H1 (cell line): ENCODE measurements at regions of chr2 and their contacts with region 1.

Region 1: GRCh38 chr2:74482801-74483674 is at the starts of genes CCDC142 and TTC31:
- DNase-seq: peak; percentile 83 to 96
- H3K4me3 ChIP-seq: peak within 1 kb of the TSS; percentile 69 to 99 (median 93)
- H3K27ac ChIP-seq: peak within 1 kb of the TSS; percentile 92
- H3K4me1 ChIP-seq: peaks cover 0 to 10% (median 4%) of the 10 kb centered on the region in 4 experiments; a peak in 4 of 7 replicates
- H3K27me3 ChIP-seq: no peaks in the 10 kb centered on the region; a peak in 1 of 7 replicates
- CTCF ChIP-seq: peak; percentile 81 to 95 (median 89)
- EP300 ChIP-seq: no peak
- POLR2A ChIP-seq: peak in 1 of 2 experiments; percentile 91; a peak in 2 of 3 replicates
- RAD21 ChIP-seq: peak; percentile 79 to 85
- total RNA-seq, gene CCDC142: 10.7 and 12.1 TPM in 2 replicates
- total RNA-seq, gene TTC31: 27.4 and 28.8 TPM in 2 replicates

Region 2: DNA sequence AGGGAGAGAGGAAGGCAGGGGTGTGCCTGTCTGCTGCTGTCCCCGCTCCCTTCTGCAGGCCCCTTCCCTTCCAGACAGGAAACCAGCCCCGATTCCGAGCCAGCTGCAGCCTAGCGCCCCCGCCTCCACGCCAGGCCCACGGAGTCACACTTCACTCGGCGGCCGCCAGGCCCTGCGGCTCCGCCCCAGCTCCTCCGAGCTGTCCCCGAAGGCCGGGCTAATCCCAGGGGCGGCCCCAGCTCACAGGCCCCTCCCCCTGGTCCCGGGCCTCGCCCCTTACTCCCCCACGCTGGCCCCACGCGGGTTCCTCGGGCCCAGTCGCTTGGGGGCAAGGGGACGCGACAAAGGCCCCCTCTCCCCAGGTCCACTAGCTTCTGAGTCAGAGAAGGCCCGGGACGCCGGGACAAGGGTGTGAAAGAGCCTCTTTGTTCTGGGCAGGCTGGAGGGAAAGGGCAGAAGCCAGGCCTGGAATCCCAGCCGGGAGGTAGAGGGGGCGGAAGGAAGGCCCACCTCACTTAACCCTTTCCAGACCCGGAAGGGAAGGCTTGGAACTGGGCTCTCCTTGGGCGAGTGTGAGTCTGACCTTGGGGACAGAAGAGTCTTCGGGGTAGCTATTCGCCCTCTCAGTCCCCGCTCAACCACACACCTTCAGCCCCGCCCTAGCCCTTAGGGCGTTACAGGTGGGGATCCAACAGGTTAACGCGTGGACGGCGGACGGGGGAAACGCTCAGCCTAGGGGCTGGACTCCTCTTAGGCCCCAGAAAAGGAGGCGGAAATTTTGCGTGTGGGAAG is 42.5 kb before region 1 on chr2:
- CTCF ChIA-PET with region 1: interaction called, 4 read pairs
- POLR2A ChIA-PET with region 1: interaction called, 19 read pairs
- DNase-seq: peak in 1 of 2 experiments; percentile 92
- H3K4me3 ChIP-seq: peak overlapping the region; percentile 69 to 90 (median 80)
- H3K27ac ChIP-seq: peak overlapping the region; percentile 87
- H3K4me1 ChIP-seq: peaks cover 4 to 24% (median 17%) of the 10 kb centered on the region in 4 experiments; a peak in 6 of 7 replicates
- H3K27me3 ChIP-seq: no peaks in the 10 kb centered on the region; a peak in 2 of 7 replicates
- CTCF ChIP-seq: peak in 2 of 3 experiments; percentile 12 to 18; a peak in 2 of 4 replicates
- EP300 ChIP-seq: no peak
- POLR2A ChIP-seq: peak in 1 of 2 experiments; percentile 50; a peak in 1 of 3 replicates
- RAD21 ChIP-seq: no peak

Region 3: GRCh38 chr2:74464406-74464928 is 18.6 kb before region 1 on chr2:
- CTCF ChIA-PET with region 1: interaction called, 73 read pairs
- POLR2A ChIA-PET with region 1: interaction called, 85 read pairs
- DNase-seq: no peak
- H3K4me3 ChIP-seq: peak overlapping the region; percentile 54 to 85 (median 79)
- H3K27ac ChIP-seq: no peak overlapping the region
- H3K4me1 ChIP-seq: peaks cover 0 to 2% (median 0%) of the 10 kb centered on the region in 4 experiments; a peak in 2 of 7 replicates
- H3K27me3 ChIP-seq: no peaks in the 10 kb centered on the region
- CTCF ChIP-seq: no peak
- EP300 ChIP-seq: no peak
- POLR2A ChIP-seq: no peak
- RAD21 ChIP-seq: no peak

Region 4: DNA sequence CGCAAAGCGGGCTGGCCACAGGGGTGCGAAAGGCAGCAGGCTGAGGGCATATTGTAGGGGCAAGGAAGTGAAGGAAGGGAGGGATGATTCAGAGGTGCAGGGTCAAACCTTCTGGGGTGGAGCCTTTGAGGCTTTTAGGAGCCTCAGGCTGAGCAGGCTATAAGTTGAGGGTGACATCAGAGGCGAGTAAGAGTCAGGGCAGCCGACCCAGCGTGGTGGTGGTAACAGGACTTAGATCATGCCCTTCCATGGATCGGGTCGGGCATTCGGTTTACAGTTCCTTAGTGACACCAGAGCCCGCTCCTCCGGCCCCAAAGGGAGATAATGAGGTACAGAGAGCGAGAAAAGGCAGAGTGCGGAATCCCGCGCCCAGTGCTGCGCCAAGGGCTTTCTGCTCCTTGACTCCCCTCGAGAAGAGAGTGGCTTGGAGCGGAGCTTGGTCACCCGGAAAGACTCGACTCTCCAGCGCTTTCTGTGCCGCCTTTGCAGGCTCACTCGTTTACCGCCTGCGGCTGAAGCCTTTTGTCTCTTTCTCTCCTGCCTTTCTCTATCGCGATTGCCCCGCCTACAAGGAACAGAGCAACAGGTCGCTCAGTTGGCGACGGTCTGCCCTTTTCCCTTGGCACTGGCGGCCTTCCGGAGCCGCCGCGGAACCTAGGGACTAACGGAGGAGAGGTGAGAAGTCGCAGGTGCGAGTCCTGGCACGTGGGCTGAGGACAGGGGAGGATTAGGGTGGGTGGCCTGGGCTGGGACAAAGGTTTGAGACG is 15.6 kb after region 1 on chr2:
- CTCF ChIA-PET with region 1: interaction called, 24 read pairs
- POLR2A ChIA-PET with region 1: interaction called, 59 read pairs
- DNase-seq: peak in 1 of 2 experiments; percentile 83
- H3K4me3 ChIP-seq: peak overlapping the region; percentile 20 to 57 (median 46); a peak in 7 of 8 replicates
- H3K27ac ChIP-seq: no peak overlapping the region
- H3K4me1 ChIP-seq: peaks cover 7 to 53% (median 31%) of the 10 kb centered on the region in 4 experiments
- H3K27me3 ChIP-seq: peaks cover 75 to 88% (median 87%) of the 10 kb centered on the region in 4 experiments
- CTCF ChIP-seq: no peak
- EP300 ChIP-seq: no peak
- POLR2A ChIP-seq: no peak
- RAD21 ChIP-seq: no peak

Region 5: DNA sequence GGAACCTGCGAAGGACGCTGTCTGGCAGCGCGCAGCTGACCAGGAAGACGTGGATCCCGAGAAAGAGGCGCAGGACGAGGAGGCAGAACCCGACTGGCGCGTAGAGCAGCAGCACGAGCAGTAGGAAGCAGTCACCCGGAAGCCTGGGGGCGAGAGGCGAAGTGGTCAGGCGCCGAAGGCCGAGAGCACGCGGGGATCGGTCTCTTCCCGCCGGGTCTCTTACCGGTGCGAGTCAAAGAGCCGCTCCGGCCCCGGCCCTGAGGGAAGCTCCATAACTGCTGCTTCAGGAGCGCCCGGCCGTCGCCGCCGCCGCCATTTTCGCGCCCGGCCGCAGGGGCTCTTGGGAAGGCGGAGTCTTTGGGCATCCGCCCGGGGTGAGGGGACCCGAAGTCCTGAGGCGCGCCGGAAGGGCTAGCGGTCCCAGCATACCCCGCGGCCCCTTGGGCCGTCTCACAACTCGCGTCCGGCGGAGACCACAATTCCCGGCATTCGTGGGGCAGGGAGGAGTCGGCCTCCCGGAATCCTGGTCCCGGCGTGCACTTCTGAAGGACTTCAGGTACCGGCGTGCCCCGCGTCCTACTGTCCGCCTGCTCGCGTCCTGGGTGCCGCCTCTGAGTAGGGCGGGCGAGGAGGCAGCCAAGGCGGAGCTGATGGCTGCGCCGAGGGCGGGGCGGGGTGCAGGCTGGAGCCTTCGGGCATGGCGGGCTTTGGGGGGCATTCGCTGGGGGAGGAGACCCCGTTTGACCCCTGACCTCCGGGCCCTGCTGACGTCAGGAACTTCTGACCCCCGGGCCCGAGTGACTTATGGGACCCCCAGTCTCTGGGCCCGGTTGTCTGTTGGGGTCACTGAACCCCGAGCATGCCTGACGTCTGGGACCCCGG is 46.6 kb after region 1 on chr2 and contains the starts of genes AUP1 and HTRA2:
- CTCF ChIA-PET with region 1: interaction called, 7 read pairs
- POLR2A ChIA-PET with region 1: interaction called, 16 read pairs
- DNase-seq: peak; percentile 94 to 95
- H3K4me3 ChIP-seq: peak within 1 kb of the TSS; percentile 85 to 99 (median 92)
- H3K27ac ChIP-seq: peak within 1 kb of the TSS; percentile 90
- H3K4me1 ChIP-seq: peaks cover 4 to 13% (median 6%) of the 10 kb centered on the region in 4 experiments; a peak in 6 of 7 replicates
- H3K27me3 ChIP-seq: no peaks in the 10 kb centered on the region; a peak in 1 of 7 replicates
- CTCF ChIP-seq: no peak
- EP300 ChIP-seq: peak in 1 of 2 experiments; percentile 5; a peak in 1 of 3 replicates
- POLR2A ChIP-seq: peak in 1 of 2 experiments; percentile 94; a peak in 2 of 3 replicates
- RAD21 ChIP-seq: 0 out of 4 replicates have a peak, but pooled peaks of 1 of the 2 experiments have one; percentile 3
- total RNA-seq, gene AUP1: 82.7 and 83.4 TPM in 2 replicates
- total RNA-seq, gene HTRA2: 21.6 and 24.6 TPM in 2 replicates